ENCODE measurements at regions of chr1 and their contacts with region 1.

Region 1: GRCh38 chr1:207885129-207886032 is 25.5 kb downstream of the CD34 start:
- DNase-seq: peak; percentile 51
- ATAC-seq: peak; percentile 86
- H3K4me3 Mint-ChIP-seq: no peak overlapping the region
- H3K27ac Mint-ChIP-seq: no peak overlapping the region
- H3K4me1 Mint-ChIP-seq: peaks cover 32% of the 10 kb centered on the region
- H3K27me3 Mint-ChIP-seq: peaks cover 6% of the 10 kb centered on the region
- CTCF ChIP-seq: peak; percentile 64

Region 2: DNA sequence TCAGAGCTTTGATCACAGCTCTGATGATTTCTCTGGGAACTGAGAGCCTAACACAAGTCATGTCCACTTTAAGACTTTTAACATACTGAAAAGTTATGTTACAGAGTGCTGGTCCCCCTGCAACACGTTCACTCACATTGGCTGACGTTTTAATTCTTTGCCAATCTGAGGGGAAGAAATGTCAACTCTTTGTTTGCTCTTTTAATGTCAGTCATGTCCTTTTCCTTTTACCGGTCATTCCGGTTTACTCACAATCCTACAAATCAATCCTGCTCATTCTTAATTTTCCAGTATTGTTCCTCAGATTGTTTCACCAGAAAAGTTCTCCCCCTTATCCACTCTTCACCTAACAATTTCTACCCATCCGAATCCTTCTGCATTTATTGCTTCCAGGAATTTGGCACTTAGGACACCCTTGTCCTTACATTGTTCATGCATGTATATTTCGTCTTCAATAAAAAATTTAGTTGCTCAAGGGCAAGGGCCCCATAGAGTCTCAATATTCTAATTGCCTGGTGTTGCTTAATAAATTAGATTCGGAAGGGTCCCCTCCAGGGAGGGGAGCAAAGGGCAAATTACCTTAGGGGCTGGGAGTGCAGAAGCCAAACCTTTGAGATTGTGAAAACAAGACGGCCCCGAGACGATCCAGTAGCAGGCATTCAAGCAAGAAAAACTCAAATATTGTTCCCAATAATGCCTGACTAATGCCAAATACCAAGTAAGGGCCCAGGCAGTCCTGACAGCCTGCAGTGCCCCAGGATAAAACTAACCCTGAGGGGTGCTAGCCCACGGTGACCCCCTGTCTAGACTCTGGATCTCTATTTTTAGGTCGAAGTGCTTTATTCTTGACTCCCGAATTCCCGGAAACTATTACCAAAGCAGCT is 134.2 kb before region 1 on chr1:
- CTCF ChIA-PET with region 1: no interaction called
- POLR2A ChIA-PET with region 1: no interaction called
- intact Hi-C with region 1: no loop called
- DNase-seq: no peak
- ATAC-seq: no peak
- H3K4me3 Mint-ChIP-seq: peak overlapping the region; percentile 100
- H3K27ac Mint-ChIP-seq: peak overlapping the region; percentile 96
- H3K4me1 Mint-ChIP-seq: peaks cover 56% of the 10 kb centered on the region
- H3K27me3 Mint-ChIP-seq: no peaks in the 10 kb centered on the region
- CTCF ChIP-seq: no peak

Region 3: DNA sequence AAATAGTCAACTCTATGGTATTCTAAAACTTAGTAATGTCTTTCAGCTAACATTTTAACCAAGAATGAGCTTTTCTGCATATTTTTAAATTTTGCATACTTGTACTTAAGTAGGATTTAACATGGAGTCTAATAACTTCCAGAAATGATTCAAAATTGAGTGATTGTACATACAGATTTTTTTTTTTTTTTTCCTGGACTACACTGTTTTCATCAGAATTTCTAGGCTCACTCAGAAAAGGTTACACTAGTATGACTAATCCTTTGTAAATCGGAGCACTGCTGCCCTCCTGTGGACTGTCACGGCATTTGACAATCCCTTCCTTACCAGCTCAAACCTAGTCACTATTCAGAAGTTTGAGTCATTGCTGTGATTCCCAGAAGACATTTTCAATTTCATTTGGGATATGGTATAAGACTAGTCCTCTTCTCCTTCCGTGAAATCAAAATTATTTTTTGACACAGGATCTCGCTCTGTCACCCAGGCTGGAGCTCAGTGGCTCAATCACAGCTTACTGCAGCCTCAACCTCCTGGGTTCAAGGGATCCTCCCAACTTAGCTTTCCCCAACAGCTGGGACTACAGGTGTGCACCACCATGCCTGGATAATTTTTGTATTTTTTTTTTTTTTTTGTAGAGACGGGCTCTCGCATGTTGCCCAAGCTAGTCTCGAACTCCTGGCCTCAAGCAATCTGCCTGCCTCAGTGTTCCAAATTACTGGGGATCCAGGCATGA is 88.0 kb before region 1 on chr1:
- CTCF ChIA-PET with region 1: interaction called, 12 read pairs
- POLR2A ChIA-PET with region 1: interaction called, 7 read pairs
- intact Hi-C with region 1: no loop called
- DNase-seq: peak; percentile 54
- ATAC-seq: peak; percentile 92
- H3K4me3 Mint-ChIP-seq: no peak overlapping the region
- H3K27ac Mint-ChIP-seq: peak overlapping the region; percentile 27
- H3K4me1 Mint-ChIP-seq: peaks cover 30% of the 10 kb centered on the region
- H3K27me3 Mint-ChIP-seq: no peaks in the 10 kb centered on the region
- CTCF ChIP-seq: peak; percentile 90

Region 4: DNA sequence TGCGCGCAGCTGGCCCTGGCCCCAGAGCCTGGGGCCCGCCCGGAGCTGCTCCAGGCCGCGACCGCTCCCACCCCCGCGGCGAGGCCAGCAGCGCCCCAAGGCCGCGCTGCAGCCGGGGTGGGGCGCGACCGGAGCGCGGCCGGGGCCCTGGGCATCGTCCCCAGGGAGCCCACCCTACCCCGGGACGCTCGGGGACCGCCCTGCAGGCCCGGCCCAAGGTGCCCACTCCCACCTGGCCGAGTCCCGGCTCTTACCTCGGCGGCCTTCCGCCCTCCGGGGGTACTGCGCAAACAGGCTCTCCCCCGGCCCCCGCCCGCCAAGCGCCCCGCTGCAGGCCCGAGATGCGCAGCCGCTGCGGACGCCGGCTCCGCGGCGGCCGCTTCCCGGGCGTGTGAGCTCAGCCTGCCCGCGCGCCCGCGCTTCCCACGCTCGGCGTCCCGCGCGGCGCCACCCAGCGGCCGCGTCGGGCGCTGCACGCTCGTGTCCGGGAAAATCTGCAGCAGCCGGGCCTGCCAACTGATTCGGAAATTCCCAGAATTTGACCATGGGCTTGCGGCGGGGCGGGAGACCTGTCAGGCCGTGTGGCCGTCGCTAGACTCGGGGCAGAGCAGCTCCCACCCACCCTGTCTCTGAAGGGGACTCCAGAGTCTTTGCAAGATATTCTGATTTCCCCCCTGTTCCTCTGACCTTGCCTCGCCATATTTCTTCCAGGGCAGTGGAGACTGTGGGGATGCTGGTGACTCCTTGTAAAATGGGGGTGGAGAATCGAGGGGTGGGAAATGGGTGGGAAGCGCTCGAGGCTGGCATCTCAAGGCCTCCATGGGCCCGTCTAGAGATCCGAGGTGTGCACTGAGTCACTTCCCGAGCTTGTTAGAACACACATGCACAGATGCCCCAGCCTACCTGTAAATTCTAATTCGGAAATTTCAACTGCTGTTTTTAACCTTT is 16.3 kb before region 1 on chr1:
- CTCF ChIA-PET with region 1: interaction called, 47 read pairs
- POLR2A ChIA-PET with region 1: interaction called, 7 read pairs
- intact Hi-C with region 1: loop called (anchors 1 kb)
- DNase-seq: peak; percentile 74
- ATAC-seq: peak; percentile 83
- H3K4me3 Mint-ChIP-seq: peak overlapping the region; percentile 91
- H3K27ac Mint-ChIP-seq: peak overlapping the region; percentile 86
- H3K4me1 Mint-ChIP-seq: peaks cover 86% of the 10 kb centered on the region
- H3K27me3 Mint-ChIP-seq: no peaks in the 10 kb centered on the region
- CTCF ChIP-seq: peak; percentile 34

Region 5: DNA sequence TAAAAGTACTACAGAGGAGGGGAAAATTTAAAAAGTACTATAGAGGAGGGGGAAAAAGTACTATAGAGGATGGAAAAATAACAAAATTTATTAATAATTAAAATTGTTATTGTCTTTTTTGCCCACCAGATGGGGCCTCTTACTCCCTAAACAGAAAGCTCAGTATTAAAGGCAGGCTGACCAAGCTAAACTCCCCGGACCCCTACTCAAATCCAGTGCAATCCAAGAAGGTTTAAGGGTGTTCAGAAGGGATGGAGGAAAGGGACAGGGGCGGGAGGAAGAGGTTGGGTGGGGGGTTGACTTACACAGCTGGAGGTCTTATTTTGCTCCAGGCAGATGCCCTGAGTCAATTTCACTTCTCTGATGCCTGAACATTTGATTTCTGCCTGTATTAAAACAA is 11.8 kb after region 1 on chr1:
- CTCF ChIA-PET with region 1: interaction called, 33 read pairs
- POLR2A ChIA-PET with region 1: no interaction called
- intact Hi-C with region 1: no loop called
- DNase-seq: no peak
- ATAC-seq: no peak
- H3K4me3 Mint-ChIP-seq: no peak overlapping the region
- H3K27ac Mint-ChIP-seq: no peak overlapping the region
- H3K4me1 Mint-ChIP-seq: peaks cover 8% of the 10 kb centered on the region
- H3K27me3 Mint-ChIP-seq: peaks cover 2% of the 10 kb centered on the region
- CTCF ChIP-seq: no peak

Region 6: DNA sequence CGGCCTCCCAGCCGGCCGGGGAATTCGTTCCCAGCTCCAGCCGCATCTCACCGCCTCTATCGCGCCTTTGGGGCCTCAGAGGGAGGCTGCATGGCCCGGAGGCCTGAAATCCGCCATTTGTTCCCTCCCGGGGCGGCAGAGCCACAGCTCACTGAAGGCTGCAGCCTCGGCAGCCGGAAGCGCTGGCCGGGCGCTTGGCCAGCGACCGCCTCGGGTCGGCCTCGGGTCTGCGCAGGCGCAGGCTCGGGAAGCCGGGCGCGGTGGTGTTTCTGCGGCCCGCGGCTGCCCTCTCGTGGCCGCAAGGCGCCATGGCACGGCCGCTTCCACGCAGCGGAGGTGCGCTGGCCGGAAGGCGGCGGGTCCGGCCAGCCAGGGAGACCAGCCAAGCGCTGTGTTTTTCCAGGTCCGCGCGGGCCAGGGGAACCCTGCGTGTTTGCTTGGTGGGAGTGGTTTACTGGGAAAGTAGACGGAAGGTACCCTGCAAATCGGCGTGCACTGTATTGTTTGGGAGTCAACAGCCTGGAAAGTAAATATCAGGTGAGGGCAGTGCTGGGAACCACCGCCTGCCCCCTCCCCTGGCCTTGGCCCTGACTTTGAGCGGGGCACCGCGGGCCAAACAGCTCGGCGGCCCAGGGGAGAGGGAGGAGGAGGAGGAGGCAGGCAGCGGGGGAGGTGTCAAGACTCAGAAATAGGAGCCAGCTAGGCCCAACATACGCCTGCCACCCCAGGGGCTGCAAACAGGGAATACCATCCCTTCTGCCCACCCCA is 78.2 kb after region 1 on chr1:
- CTCF ChIA-PET with region 1: interaction called, 85 read pairs
- POLR2A ChIA-PET with region 1: interaction called, 8 read pairs
- intact Hi-C with region 1: loop called (anchors 1 kb)
- DNase-seq: peak; percentile 89
- ATAC-seq: peak; percentile 95
- H3K4me3 Mint-ChIP-seq: peak overlapping the region; percentile 87
- H3K27ac Mint-ChIP-seq: no peak overlapping the region
- H3K4me1 Mint-ChIP-seq: peaks cover 17% of the 10 kb centered on the region
- H3K27me3 Mint-ChIP-seq: peaks cover 28% of the 10 kb centered on the region
- CTCF ChIP-seq: peak; percentile 54

Region 7: GRCh38 chr1:207997486-207998268 is 112.3 kb after region 1 on chr1:
- CTCF ChIA-PET with region 1: interaction called, 13 read pairs
- POLR2A ChIA-PET with region 1: no interaction called
- intact Hi-C with region 1: loop called (anchors 1 kb)
- DNase-seq: no peak
- ATAC-seq: peak; percentile 67
- H3K4me3 Mint-ChIP-seq: no peak overlapping the region
- H3K27ac Mint-ChIP-seq: no peak overlapping the region
- H3K4me1 Mint-ChIP-seq: no peaks in the 10 kb centered on the region
- H3K27me3 Mint-ChIP-seq: peaks cover 11% of the 10 kb centered on the region
- CTCF ChIP-seq: no peak

Region 8: DNA sequence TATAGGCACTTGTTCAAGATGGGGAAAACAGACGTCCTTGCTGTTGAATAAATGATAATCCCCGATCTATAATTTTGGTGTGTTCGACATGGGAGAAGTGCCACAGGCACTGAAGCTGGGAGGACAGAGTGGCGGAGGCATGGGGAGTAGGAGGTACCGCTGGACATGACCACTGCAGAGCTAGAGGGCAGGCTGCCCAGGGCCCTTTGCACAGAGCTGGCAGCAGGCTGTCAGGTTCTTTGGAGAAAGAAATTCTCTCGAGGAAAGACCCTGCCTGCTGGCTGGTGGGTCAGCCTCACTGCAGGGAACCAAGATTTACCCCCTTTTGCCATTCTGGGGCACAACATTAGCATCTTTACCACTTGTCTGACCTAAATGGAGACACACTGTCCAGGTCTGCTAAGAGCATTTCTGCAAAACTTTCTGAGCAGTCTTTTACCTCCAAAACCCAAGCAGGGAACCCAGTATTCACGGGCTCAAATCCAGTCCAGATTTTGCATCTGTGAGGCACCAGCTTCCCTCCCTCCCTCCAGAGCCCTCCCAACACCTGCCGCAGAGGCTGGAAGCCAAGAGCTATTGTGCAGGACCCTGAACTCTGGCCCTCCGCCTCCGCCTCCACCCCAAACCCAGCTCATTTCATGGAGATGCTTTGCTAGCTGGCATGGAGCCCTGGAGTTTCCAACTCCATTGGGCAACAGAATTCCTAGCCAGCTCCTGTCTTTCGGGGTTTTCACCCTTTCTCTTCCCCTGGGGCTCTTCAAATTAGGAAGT is 216.5 kb after region 1 on chr1:
- CTCF ChIA-PET with region 1: no interaction called
- POLR2A ChIA-PET with region 1: no interaction called
- intact Hi-C with region 1: no loop called
- DNase-seq: no peak
- ATAC-seq: no peak
- H3K4me3 Mint-ChIP-seq: no peak overlapping the region
- H3K27ac Mint-ChIP-seq: no peak overlapping the region
- H3K4me1 Mint-ChIP-seq: no peaks in the 10 kb centered on the region
- H3K27me3 Mint-ChIP-seq: peaks cover 8% of the 10 kb centered on the region
- CTCF ChIP-seq: no peak

Region 9: DNA sequence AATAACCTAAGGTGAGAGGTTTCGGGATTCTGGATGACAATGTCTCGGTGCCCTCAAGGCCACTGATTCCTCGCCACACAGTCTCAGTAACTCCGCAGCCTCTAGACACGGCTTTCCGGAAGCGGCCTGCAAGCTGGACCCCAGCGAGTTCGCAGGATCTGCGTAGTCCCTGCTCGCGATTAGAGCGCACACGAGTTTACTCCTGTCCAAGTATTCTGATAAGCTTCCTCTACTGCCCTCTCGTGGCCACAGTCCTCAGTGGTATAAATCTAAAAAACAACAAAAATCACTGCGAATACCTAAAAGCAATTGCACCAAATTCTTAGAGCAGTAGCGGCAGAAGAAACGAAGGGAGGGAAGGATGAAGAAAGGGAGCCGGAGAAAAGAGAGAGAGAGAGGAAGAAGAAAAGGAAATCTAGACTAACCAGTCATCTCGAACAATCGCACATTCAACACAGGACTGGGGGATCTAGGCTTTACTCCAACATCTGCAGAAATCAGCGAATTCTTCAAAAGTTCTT is 359.9 kb after region 1 on chr1:
- CTCF ChIA-PET with region 1: no interaction called
- POLR2A ChIA-PET with region 1: no interaction called
- intact Hi-C with region 1: loop called (anchors 2 kb)
- DNase-seq: peak; percentile 45
- ATAC-seq: peak; percentile 69
- H3K4me3 Mint-ChIP-seq: peak overlapping the region; percentile 87
- H3K27ac Mint-ChIP-seq: peak overlapping the region; percentile 54
- H3K4me1 Mint-ChIP-seq: peaks cover 13% of the 10 kb centered on the region
- H3K27me3 Mint-ChIP-seq: peaks cover 6% of the 10 kb centered on the region
- CTCF ChIP-seq: no peak